Caco-2 (cell line): ENCODE measurements at regions of chr3 and their contacts with region 1.

Region 1: GRCh38 chr3:31567036-31567435 is 34.3 kb downstream of the STT3B start:
- DNase-seq: peak in 1 of 2 experiments; percentile 45
- H3K4me3 ChIP-seq: no peak overlapping the region
- H3K4me3 Mint-ChIP-seq: no peak overlapping the region
- H3K27ac Mint-ChIP-seq: no peak overlapping the region
- H3K4me1 ChIP-seq: peaks cover 27% of the 10 kb centered on the region
- H3K4me1 Mint-ChIP-seq: peaks cover 50% of the 10 kb centered on the region
- H3K27me3 ChIP-seq: no peaks in the 10 kb centered on the region
- H3K27me3 Mint-ChIP-seq: no peaks in the 10 kb centered on the region
- CTCF ChIP-seq: peak; percentile 39 to 71

Region 2: GRCh38 chr3:30952786-30953185 is 614.2 kb before region 1 on chr3:
- CTCF ChIA-PET with region 1: no interaction called
- POLR2A ChIA-PET with region 1: no interaction called
- intact Hi-C with region 1: no loop called
- DNase-seq: no peak
- H3K4me3 ChIP-seq: no peak overlapping the region
- H3K4me3 Mint-ChIP-seq: no peak overlapping the region
- H3K27ac Mint-ChIP-seq: no peak overlapping the region
- H3K4me1 ChIP-seq: no peaks in the 10 kb centered on the region
- H3K4me1 Mint-ChIP-seq: peaks cover 16% of the 10 kb centered on the region
- H3K27me3 ChIP-seq: no peaks in the 10 kb centered on the region
- H3K27me3 Mint-ChIP-seq: no peaks in the 10 kb centered on the region
- CTCF ChIP-seq: no peak

Region 3: GRCh38 chr3:31485196-31485595 is 81.8 kb before region 1 on chr3:
- CTCF ChIA-PET with region 1: no interaction called
- POLR2A ChIA-PET with region 1: no interaction called
- intact Hi-C with region 1: no loop called
- DNase-seq: no peak
- H3K4me3 ChIP-seq: no peak overlapping the region
- H3K4me3 Mint-ChIP-seq: no peak overlapping the region
- H3K27ac Mint-ChIP-seq: no peak overlapping the region
- H3K4me1 ChIP-seq: peaks cover 22% of the 10 kb centered on the region
- H3K4me1 Mint-ChIP-seq: peaks cover 25% of the 10 kb centered on the region
- H3K27me3 ChIP-seq: no peaks in the 10 kb centered on the region
- H3K27me3 Mint-ChIP-seq: no peaks in the 10 kb centered on the region
- CTCF ChIP-seq: no peak

Region 4: GRCh38 chr3:31592764-31593163 is 25.7 kb after region 1 on chr3:
- CTCF ChIA-PET with region 1: no interaction called
- POLR2A ChIA-PET with region 1: no interaction called
- intact Hi-C with region 1: loop called (anchors 2 kb)
- DNase-seq: peak in 1 of 2 experiments; percentile 48
- H3K4me3 ChIP-seq: no peak overlapping the region
- H3K4me3 Mint-ChIP-seq: no peak overlapping the region
- H3K27ac Mint-ChIP-seq: no peak overlapping the region
- H3K4me1 ChIP-seq: peaks cover 4% of the 10 kb centered on the region; the same call in 1 of the 2 replicates
- H3K4me1 Mint-ChIP-seq: peaks cover 17% of the 10 kb centered on the region
- H3K27me3 ChIP-seq: no peaks in the 10 kb centered on the region
- H3K27me3 Mint-ChIP-seq: no peaks in the 10 kb centered on the region
- CTCF ChIP-seq: no peak

Region 5: GRCh38 chr3:31639828-31640227 is 72.8 kb after region 1 on chr3:
- CTCF ChIA-PET with region 1: no interaction called
- POLR2A ChIA-PET with region 1: no interaction called
- intact Hi-C with region 1: no loop called
- DNase-seq: no peak
- H3K4me3 ChIP-seq: no peak overlapping the region
- H3K4me3 Mint-ChIP-seq: no peak overlapping the region
- H3K27ac Mint-ChIP-seq: no peak overlapping the region
- H3K4me1 ChIP-seq: peaks cover 14% of the 10 kb centered on the region
- H3K4me1 Mint-ChIP-seq: no peaks in the 10 kb centered on the region
- H3K27me3 ChIP-seq: no peaks in the 10 kb centered on the region
- H3K27me3 Mint-ChIP-seq: no peaks in the 10 kb centered on the region
- CTCF ChIP-seq: peak in 1 of 2 experiments; percentile 18